ENCODE measurements at regions of chr4 and their contacts with region 1.

Region 1: GRCh38 chr4:152885185-152885584 is 50.9 kb upstream of the FHDC1 start:
- DNase-seq: no peak
- H3K4me3 ChIP-seq: no peak overlapping the region
- H3K27ac ChIP-seq: no peak overlapping the region
- H3K27me3 ChIP-seq: no peaks in the 10 kb centered on the region
- CTCF ChIP-seq: no peak

Region 2: GRCh38 chr4:152935631-152936445 is 50.7 kb after region 1 on chr4 and contains the start of gene FHDC1:
- CTCF ChIA-PET with region 1: no interaction called
- POLR2A ChIA-PET with region 1: no interaction called
- DNase-seq: no peak
- H3K4me3 ChIP-seq: peak within 1 kb of the TSS; percentile 53
- H3K27ac ChIP-seq: no peak within 1 kb of the TSS
- H3K27me3 ChIP-seq: peaks cover 60% of the 10 kb centered on the region
- CTCF ChIP-seq: no peak
- polyA plus RNA-seq, gene FHDC1: 0.10 and 0.12 TPM in 2 replicates

Region 3: GRCh38 chr4:153018684-153019083 is 133.5 kb after region 1 on chr4:
- CTCF ChIA-PET with region 1: interaction called, 13 read pairs
- POLR2A ChIA-PET with region 1: no interaction called
- DNase-seq: no peak
- H3K4me3 ChIP-seq: no peak overlapping the region
- H3K27ac ChIP-seq: no peak overlapping the region
- H3K27me3 ChIP-seq: peaks cover 17% of the 10 kb centered on the region
- CTCF ChIP-seq: no peak